Activated naive CD4-positive, alpha-beta T cell treated with anti-CD3 and anti-CD28 coated beads, Interleukin-2, amount 10 ng/mL, durations not matched to agents 7 days and 5 days (primary cell): ENCODE measurements at regions of chr3 and their contacts with region 1.

Region 1: DNA sequence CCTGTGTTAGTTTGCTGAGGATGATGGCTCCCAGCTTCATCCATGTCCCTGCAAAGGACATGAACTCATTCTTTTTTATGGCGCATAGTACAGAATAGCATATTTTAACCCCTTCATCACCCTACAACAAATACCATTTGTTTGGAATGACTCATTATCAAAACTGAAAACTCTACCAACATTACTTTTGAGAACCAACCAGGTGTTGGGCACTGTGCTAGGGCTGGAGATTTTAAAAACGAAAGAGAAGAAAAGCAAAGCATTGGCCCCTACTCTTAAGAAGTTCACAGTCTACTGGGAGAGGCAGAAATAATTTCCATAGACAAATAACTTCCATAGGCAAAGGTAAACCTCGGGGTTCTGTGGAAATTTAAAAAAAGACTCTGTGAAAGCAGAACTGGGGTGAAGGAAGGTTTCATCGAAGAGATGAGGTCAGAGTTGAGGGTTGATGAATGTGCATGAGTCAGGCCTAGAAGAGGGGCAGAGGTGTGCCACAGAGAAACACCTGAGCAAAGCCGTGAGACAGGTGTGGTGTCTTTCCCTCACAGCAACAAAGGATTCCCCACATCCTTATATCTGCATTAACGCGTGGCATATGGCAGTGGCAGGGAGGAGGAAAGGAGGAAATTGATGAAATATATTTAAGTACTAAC is 51.0 kb downstream of the MCF2L2 start:
- DNase-seq: no peak
- H3K4me3 Mint-ChIP-seq: no peak overlapping the region
- H3K27ac Mint-ChIP-seq: no peak overlapping the region
- H3K4me1 Mint-ChIP-seq: no peaks in the 10 kb centered on the region
- H3K27me3 Mint-ChIP-seq: peaks cover 3% of the 10 kb centered on the region

Region 2: DNA sequence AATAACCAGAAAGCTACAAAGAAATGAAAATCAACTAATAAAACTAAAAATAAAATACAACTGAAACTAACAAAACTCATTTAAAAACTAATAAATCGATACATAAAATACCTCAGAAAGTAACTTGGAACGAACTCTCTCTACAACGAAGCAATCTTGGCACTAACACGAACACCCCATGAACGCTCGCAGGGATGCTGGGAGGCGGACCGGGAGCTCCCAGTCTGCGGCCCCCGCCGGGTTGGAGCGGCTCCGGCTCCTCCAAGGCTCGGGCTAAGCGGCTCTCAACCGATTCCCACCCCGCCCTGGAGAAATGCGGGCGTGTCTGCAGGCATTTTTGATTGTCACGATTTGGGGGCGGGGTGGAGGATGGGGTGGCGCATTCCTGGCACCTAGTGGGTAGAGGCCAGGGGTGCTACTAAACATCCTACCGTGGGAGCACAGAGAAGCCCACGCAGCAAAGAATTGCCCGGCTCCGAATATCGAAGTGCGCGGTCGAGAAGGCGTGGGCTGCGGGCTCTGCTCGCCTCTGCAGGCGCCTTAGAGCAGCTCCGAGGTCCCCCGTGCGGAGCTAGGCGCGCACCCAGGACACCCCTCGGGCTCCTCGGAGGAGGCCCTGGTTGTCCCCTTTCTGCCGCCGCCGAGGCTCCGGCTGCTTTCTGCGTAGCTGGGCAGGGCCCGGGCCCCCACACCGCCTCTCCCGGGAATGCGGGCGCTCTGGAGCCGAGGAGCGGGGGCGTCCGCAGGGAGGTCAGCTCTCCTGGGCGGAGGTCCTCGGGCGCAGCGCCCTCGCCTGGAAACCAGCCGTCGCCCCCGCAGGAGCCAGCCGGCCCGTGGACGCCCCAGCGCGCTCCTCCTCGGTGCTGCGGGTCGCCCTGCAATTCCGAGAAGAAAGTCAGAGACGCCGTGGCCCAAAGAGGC is 198.5 kb before region 1 on chr3:
- CTCF ChIA-PET with region 1: interaction called, 202 read pairs
- DNase-seq: peak; percentile 60
- H3K4me3 Mint-ChIP-seq: peak overlapping the region; percentile 67
- H3K27ac Mint-ChIP-seq: no peak overlapping the region
- H3K4me1 Mint-ChIP-seq: peaks cover 21% of the 10 kb centered on the region
- H3K27me3 Mint-ChIP-seq: peaks cover 71% of the 10 kb centered on the region

Region 3: GRCh38 chr3:183188895-183189462 is 188.5 kb before region 1 on chr3:
- CTCF ChIA-PET with region 1: interaction called, 202 read pairs
- DNase-seq: peak; percentile 54
- H3K4me3 Mint-ChIP-seq: no peak overlapping the region
- H3K27ac Mint-ChIP-seq: no peak overlapping the region
- H3K4me1 Mint-ChIP-seq: no peaks in the 10 kb centered on the region
- H3K27me3 Mint-ChIP-seq: no peaks in the 10 kb centered on the region